T-cell (primary cell): ENCODE measurements at regions of chr1 and their contacts with region 1.

Region 1: DNA sequence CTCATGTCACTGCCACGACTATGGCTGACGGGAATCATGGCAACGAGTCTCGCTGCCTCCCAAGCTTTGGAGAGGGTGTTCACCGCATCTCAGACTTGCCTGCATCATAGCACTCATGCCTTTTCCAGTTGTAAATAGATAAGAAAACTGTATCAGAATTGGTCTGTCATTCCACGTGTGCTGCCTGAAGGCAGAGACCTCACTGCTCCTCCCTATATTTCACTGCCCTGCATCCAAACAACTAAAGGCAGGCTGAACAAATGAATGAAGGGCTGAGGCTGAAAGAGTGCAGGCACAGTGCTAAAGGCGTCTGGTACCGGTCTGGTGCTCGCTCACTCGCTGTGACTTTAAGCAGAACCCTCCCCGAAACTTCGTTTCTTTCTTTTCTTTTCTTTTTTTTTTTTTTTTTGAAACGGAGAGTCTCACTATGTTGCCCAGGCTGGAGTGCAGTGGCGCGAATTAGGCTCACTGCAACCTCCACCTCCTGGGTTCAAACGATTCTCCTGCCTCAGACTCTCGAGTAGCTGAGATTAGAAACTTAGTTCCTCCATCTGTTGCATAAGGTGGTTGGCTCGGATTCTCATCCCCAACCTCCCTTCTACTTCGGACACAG is 542 bp downstream of the EIF2B3 start:
- DNase-seq: no peak
- ATAC-seq: peak in 1 of 4 experiments; percentile 1
- H3K4me3 ChIP-seq: peak overlapping the region; percentile 68 to 96
- H3K4me3 Mint-ChIP-seq: peak overlapping the region; percentile 95 to 99 (median 99)
- H3K27ac ChIP-seq: no peak overlapping the region
- H3K27ac Mint-ChIP-seq: peak overlapping the region; percentile 92 to 93
- H3K4me1 ChIP-seq: peaks cover 9 to 19% of the 10 kb centered on the region in 2 experiments
- H3K4me1 Mint-ChIP-seq: peaks cover 22 to 28% (median 27%) of the 10 kb centered on the region in 3 donors
- H3K27me3 ChIP-seq: no peaks in the 10 kb centered on the region
- H3K27me3 Mint-ChIP-seq: no peaks in the 10 kb centered on the region

Region 2: GRCh38 chr1:44812822-44813543 is 172.9 kb before region 1 on chr1:
- CTCF ChIA-PET with region 1: no interaction called
- POLR2A ChIA-PET with region 1: no interaction called
- DNase-seq: peak in 1 of 35 experiments; percentile 22
- ATAC-seq: no peak
- H3K4me3 ChIP-seq: peak overlapping the region; percentile 51 to 66
- H3K4me3 Mint-ChIP-seq: peak overlapping the region in 2 of 3 donors; percentile 17 to 85
- H3K27ac ChIP-seq: peak overlapping the region; percentile 82
- H3K27ac Mint-ChIP-seq: peak overlapping the region; percentile 52 to 99
- H3K4me1 ChIP-seq: peaks cover 44 to 70% of the 10 kb centered on the region in 2 experiments
- H3K4me1 Mint-ChIP-seq: peaks cover 61 to 72% (median 66%) of the 10 kb centered on the region in 3 donors
- H3K27me3 ChIP-seq: no peaks in the 10 kb centered on the region
- H3K27me3 Mint-ChIP-seq: no peaks in the 10 kb centered on the region

Region 3: DNA sequence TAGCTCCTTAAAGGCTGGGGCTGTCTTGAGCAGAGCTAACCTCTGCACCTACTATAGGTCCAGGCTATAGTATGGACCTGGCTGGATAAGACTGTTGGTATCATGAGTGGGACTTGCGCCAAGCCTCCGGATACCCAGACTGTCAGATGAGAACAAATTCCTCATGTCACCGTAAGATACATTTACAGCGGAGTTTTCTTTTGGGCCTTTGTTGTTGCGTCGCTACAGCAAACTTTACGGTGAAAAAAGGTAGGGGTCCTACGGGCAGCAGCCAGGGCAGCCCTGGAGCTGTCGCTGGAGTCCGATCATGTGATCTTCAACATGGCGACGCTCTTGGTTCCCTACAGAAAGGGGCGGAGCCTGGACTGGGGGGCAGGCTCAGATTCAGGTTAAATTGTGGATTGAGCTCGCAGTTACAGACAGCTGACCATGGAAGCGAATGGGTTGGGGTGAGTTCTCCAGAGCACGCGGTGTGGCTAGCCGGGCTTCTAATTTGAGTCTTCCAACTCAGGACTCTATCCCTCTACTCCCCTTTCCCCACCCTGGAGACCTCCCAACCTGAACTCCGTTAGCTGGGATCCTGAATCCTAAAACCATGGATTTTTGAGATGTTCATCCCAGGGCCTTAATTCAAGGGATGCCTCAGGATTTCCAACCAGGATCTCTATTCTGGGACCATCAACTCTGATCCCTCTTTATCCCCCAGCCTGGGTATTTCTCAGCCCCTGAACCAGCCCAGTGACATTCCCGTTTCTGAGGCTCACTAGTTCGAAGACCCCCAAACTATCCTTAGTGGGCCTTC is 26.2 kb after region 1 on chr1 and contains the start of gene UROD:
- CTCF ChIA-PET with region 1: interaction called, 3 to 18 read pairs
- POLR2A ChIA-PET with region 1: interaction called, 4 to 9 read pairs
- DNase-seq: peak; percentile 69 to 95 (median 89)
- ATAC-seq: peak; percentile 79 to 86 (median 80)
- H3K4me3 ChIP-seq: peak within 1 kb of the TSS; percentile 71 to 90
- H3K4me3 Mint-ChIP-seq: peak within 1 kb of the TSS; percentile 82 to 94 (median 90)
- H3K27ac ChIP-seq: peak within 1 kb of the TSS; percentile 81
- H3K27ac Mint-ChIP-seq: peak within 1 kb of the TSS; percentile 88 to 91
- H3K4me1 ChIP-seq: peaks cover 21 to 54% of the 10 kb centered on the region in 2 experiments
- H3K4me1 Mint-ChIP-seq: peaks cover 51 to 59% (median 55%) of the 10 kb centered on the region in 3 donors
- H3K27me3 ChIP-seq: no peaks in the 10 kb centered on the region
- H3K27me3 Mint-ChIP-seq: no peaks in the 10 kb centered on the region
- total RNA-seq, gene UROD: 52.0 to 58.6 (median 57.3) TPM

Region 4: DNA sequence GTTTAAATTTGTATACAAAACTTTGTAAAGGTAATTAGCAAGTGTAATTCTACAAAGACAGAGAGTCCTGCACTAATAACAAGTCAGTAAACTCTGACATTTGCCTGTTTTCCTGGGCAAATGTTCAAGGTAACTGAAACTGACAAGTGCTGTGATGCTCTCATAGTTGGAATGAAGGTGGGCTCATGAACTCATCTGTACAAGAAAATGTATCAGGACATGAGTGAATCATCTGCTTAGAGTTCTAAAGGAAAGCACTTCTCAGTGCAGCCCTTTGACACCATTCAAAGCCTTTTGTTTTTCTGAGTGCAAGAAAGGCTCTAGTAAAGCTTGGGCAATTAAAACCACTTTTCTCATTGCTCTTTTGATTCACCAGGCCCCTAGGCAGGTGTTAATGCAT is 117.7 kb after region 1 on chr1:
- CTCF ChIA-PET with region 1: no interaction called
- POLR2A ChIA-PET with region 1: no interaction called
- DNase-seq: no peak
- ATAC-seq: no peak
- H3K4me3 ChIP-seq: no peak overlapping the region
- H3K4me3 Mint-ChIP-seq: no peak overlapping the region
- H3K27ac ChIP-seq: no peak overlapping the region
- H3K27ac Mint-ChIP-seq: no peak overlapping the region
- H3K4me1 ChIP-seq: no peaks in the 10 kb centered on the region
- H3K4me1 Mint-ChIP-seq: peaks cover 0 to 3% (median 0%) of the 10 kb centered on the region in 3 donors
- H3K27me3 ChIP-seq: no peaks in the 10 kb centered on the region
- H3K27me3 Mint-ChIP-seq: peaks cover 0 to 9% of the 10 kb centered on the region in 2 donors

Region 5: DNA sequence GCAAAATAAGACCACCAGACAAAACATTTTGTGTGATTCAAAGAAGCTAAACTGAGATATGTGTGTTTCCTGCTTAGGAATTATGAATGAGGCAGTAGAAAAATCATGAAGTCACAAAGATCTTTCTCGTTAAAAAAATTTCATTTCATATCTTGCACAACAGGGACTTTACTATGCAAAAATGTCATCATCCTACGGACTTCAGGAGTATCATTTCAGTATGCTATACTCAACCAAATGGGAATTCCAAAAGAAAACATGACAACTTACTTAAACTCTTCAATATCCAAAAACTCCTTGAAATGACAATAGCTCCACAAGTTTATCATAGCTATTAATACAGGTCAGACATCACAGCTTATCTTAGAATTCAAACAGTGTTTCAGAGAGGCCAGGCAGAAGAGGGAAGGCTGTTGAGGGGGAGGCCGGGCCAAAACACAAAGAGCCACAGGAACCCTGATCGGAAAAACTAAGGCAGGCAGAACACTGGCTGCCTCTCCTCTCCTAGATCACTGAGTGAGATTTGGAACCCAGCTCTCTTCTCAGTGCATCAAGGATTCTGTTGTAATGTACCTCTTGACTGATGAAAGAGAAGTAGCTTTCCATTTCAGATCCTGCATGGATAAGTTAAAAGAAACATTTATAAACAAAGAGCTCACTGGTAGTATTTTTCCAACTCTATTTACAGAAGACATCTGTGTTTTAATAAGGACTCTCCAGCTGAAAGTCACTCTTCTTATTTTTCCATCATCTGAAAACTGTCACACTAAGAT is 438.2 kb after region 1 on chr1:
- CTCF ChIA-PET with region 1: no interaction called
- POLR2A ChIA-PET with region 1: no interaction called
- DNase-seq: no peak
- ATAC-seq: no peak
- H3K4me3 ChIP-seq: no peak overlapping the region
- H3K4me3 Mint-ChIP-seq: no peak overlapping the region
- H3K27ac ChIP-seq: no peak overlapping the region
- H3K27ac Mint-ChIP-seq: no peak overlapping the region
- H3K4me1 ChIP-seq: no peaks in the 10 kb centered on the region
- H3K4me1 Mint-ChIP-seq: no peaks in the 10 kb centered on the region
- H3K27me3 ChIP-seq: no peaks in the 10 kb centered on the region
- H3K27me3 Mint-ChIP-seq: no peaks in the 10 kb centered on the region

Region 6: DNA sequence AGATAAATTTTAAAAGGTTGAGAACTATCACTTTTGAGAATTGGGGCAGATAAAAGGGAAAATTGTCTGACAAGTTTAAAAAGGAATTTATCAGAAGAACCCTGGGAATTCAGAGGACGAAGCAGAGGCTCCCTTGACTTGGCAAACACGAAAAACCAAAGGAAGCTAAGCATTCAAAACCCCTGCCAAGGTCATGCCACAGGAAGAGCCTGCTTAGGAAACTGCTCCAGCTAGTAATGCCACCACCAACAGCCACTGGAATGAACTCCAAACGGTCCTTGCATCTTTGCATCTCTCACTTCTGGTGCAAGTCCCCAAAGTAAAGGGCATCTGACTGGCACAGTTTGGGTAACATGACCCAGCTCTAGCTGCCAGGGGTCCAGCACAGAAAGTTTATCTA is 693.3 kb after region 1 on chr1:
- CTCF ChIA-PET with region 1: no interaction called
- POLR2A ChIA-PET with region 1: interaction called in 1 of 2 experiments, 12 read pairs
- DNase-seq: no peak
- ATAC-seq: no peak
- H3K4me3 ChIP-seq: no peak overlapping the region
- H3K4me3 Mint-ChIP-seq: peak overlapping the region in 1 of 3 donors; percentile 42
- H3K27ac ChIP-seq: no peak overlapping the region
- H3K27ac Mint-ChIP-seq: no peak overlapping the region
- H3K4me1 ChIP-seq: peaks cover 11 to 43% of the 10 kb centered on the region in 2 experiments
- H3K4me1 Mint-ChIP-seq: peaks cover 83 to 90% (median 87%) of the 10 kb centered on the region in 3 donors
- H3K27me3 ChIP-seq: no peaks in the 10 kb centered on the region
- H3K27me3 Mint-ChIP-seq: no peaks in the 10 kb centered on the region